ENCODE measurements at regions of chr12 and their contacts with region 1.

Region 1: GRCh38 chr12:7219599-7220243 is 30.2 kb downstream of the PEX5 start:
- DNase-seq: peak; percentile 62
- CTCF ChIP-seq: peak; percentile 84

Region 2: GRCh38 chr12:7460375-7461259 is 240.9 kb after region 1 on chr12:
- in situ Hi-C with region 1: loop called (anchors 5 kb)
- DNase-seq: peak; percentile 55
- CTCF ChIP-seq: peak; percentile 84

Region 3: DNA sequence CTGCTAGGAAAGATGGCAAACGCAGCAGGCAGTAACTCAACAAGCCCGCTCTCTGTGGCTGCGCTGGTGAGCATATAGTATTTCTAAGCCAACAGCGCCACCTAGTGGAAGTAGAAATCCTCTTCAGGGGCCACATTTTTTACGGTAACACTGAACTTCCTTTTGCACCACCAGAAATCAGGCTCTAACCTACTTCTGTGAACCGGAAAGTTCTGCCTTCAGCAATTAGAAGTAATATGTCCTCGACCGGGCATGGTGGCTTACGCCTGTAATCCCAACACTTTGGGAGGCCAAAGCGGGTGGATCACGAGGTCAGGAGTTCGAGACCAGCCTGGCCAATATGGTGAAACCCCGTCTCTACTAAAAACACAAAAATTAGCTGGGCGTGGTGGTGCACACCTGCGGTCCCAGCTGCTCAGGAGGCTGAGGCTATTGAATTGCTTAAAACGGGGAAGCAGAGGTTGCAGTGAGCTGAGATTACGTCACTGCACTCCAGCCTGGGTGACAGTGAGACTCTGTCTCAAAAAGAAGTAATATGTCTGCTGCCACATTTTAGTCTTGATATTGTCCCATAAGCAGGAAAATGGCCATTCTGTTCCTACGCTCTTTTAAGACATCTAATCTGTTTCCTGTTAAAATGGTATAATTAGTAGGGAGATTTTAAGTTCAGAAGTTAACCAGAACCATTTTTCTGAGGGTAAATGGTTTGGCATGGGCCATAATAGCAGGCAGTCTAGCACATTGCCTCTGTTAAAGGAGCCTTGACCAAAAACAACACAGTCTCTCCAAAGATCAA is 419.2 kb after region 1 on chr12:
- in situ Hi-C with region 1: loop called (anchors 10 kb)
- DNase-seq: peak; percentile 83
- CTCF ChIP-seq: peak; percentile 72

Region 4: GRCh38 chr12:7915559-7916403 is 696.1 kb after region 1 on chr12:
- in situ Hi-C with region 1: no loop called
- DNase-seq: no peak
- CTCF ChIP-seq: no peak

Region 5: GRCh38 chr12:8057839-8058238 is 838.1 kb after region 1 on chr12:
- in situ Hi-C with region 1: no loop called
- DNase-seq: no peak
- CTCF ChIP-seq: no peak